ENCODE measurements at regions of chr12 and their contacts with region 1.

Region 1: DNA sequence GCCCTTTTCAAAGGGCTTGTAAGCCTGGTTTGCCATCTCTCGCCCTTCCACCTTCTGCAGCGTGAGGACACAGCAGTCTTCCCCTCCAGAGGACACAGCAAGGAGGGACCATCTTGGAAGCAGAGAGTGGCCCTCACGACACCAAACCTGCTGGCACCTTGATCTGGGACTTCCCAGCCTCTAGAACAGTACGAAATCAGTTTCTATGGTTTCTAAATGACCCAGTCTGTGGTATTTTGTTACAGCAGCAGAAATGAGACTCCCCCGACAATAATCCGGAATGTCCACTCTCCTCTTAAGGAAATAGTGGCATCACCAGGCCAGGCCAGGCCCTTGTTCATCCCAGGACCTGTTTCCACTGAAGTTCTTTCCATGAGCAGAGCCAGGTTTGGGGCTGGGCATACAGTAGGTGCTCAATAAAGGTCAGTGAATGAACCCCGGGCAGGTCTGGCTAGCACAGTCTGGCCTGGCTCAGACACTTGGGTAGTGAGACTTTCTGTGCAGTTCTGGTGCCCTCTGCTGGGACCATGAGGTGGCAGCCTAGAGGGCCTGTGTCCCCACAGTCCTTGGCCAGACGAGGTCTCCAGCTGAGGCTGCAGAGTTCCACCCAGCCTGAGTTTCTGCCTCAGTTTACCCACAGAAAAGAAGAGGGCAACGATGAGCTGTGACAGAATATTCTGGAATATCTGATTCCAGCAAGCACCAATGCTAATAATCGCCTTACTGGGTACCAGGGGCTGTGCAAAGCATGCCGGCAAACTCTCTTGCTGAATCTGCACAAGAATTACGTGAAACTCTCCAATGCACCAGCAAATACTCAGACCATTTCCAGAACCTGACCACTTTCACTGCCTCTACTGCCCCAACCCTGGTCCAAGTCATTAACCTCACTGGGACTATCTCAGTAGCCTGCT is 14.0 kb downstream of the ABCB9 start:
- DNase-seq: peak; percentile 67
- ATAC-seq: peak; percentile 98
- H3K4me3 ChIP-seq: no peak overlapping the region
- H3K27ac ChIP-seq: no peak overlapping the region
- H3K4me1 ChIP-seq: peaks cover 3% of the 10 kb centered on the region
- H3K27me3 ChIP-seq: no peaks in the 10 kb centered on the region
- CTCF ChIP-seq: peak; percentile 95
- POLR2A ChIP-seq: no peak
- RAD21 ChIP-seq: peak; percentile 95

Region 2: DNA sequence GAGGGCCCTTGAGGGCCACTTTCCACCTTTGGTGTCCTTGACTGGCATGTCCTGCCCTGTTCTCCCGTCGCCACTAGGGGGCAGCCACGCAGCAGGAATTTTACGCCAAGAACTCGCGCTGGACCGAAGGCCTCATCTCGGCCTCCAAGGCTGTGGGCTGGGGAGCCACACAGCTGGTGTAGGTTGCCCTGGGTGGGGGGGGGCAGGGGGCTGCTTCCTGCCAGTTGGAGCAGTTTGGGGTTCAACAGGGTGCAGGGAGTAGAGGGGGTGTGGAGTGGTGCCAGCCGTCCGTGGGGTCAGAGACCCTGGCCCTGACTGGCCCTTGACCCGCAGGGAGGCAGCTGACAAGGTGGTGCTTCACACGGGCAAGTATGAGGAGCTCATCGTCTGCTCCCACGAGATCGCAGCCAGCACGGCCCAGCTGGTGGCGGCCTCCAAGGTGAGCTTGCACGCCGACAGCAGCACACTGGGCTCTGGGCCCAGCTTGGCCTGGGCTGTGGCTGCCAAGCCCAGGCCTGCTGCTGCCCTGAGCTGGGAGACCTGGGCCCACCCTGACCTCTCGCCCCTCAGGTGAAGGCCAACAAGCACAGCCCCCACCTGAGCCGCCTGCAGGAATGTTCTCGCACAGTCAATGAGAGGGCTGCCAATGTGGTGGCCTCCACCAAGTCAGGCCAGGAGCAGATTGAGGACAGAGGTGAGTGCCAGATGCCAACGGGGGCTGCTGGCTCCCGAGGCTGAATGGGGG is 91.7 kb before region 1 on chr12:
- CTCF ChIA-PET with region 1: interaction called, 4 read pairs
- POLR2A ChIA-PET with region 1: no interaction called
- dilution Hi-C with region 1: no loop called
- in situ Hi-C with region 1: no loop called
- intact Hi-C with region 1: loop called (anchors 1 kb)
- DNase-seq: peak; percentile 75
- ATAC-seq: peak; percentile 77
- H3K4me3 ChIP-seq: no peak overlapping the region
- H3K27ac ChIP-seq: no peak overlapping the region
- H3K4me1 ChIP-seq: peaks cover 3% of the 10 kb centered on the region; the same call in 1 of the 2 replicates
- H3K27me3 ChIP-seq: no peaks in the 10 kb centered on the region
- CTCF ChIP-seq: peak; percentile 91
- POLR2A ChIP-seq: peak; percentile 65
- RAD21 ChIP-seq: peak; percentile 95

Region 3: DNA sequence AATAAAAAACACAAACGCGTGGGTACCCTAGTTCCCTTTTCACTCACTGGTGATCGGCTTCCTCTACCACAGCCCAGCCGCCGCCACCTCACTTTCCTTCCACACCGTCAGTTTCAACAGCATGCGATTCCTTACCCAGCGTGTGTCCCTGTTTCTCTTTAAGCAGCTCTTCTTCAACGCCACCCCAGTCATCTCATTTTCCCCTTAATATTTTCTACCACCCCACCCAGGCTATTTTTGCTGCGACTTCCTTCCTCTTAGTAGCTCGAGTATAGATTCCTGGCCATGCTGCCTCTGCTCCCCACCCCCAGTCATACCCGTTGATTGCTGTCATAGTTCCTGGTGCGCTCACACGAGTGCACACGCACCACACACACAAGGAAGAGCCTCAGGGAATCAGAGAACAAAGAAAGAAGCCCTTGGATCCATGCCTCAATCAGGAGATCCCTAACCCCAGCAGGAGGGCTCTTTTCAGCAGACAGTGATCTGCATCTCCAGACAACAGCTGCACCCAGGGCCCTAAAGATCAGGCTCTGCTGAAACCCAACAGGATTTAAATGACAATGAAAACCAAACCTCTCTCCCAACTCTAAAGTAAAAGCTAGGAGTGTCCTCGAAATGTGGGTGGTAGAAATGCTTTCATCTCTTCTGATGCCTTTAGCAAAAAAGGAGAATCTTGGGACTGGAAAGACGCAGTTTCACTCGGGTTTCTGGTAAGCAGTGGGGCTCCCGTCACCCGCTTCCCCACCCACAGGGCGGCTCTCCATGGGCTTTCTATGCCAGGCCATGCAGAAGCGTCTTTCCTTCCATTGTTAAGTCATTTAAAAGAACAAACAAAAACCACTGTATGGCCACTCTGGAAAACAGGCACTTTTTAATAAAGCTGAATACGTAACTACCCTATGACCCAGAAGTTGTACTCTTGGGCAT is 80.1 kb before region 1 on chr12:
- CTCF ChIA-PET with region 1: interaction called, 6 read pairs
- POLR2A ChIA-PET with region 1: no interaction called
- dilution Hi-C with region 1: no loop called
- in situ Hi-C with region 1: loop called (anchors 5 kb)
- intact Hi-C with region 1: no loop called
- DNase-seq: peak; percentile 88
- ATAC-seq: peak; percentile 87
- H3K4me3 ChIP-seq: peak overlapping the region; percentile 33
- H3K27ac ChIP-seq: peak overlapping the region; percentile 91
- H3K4me1 ChIP-seq: peaks cover 25% of the 10 kb centered on the region
- H3K27me3 ChIP-seq: no peaks in the 10 kb centered on the region
- CTCF ChIP-seq: no peak
- POLR2A ChIP-seq: no peak
- RAD21 ChIP-seq: no peak; the same call in 1 of the 2 replicates

Region 4: GRCh38 chr12:122884091-122884826 is 68.0 kb before region 1 on chr12:
- CTCF ChIA-PET with region 1: interaction called, 3 read pairs
- POLR2A ChIA-PET with region 1: interaction called, 12 read pairs
- dilution Hi-C with region 1: no loop called
- in situ Hi-C with region 1: no loop called
- intact Hi-C with region 1: no loop called
- DNase-seq: peak; percentile 17
- ATAC-seq: no peak
- H3K4me3 ChIP-seq: no peak overlapping the region
- H3K27ac ChIP-seq: no peak overlapping the region
- H3K4me1 ChIP-seq: peaks cover 34% of the 10 kb centered on the region
- H3K27me3 ChIP-seq: no peaks in the 10 kb centered on the region
- CTCF ChIP-seq: no peak
- POLR2A ChIP-seq: no peak
- RAD21 ChIP-seq: no peak

Region 5: DNA sequence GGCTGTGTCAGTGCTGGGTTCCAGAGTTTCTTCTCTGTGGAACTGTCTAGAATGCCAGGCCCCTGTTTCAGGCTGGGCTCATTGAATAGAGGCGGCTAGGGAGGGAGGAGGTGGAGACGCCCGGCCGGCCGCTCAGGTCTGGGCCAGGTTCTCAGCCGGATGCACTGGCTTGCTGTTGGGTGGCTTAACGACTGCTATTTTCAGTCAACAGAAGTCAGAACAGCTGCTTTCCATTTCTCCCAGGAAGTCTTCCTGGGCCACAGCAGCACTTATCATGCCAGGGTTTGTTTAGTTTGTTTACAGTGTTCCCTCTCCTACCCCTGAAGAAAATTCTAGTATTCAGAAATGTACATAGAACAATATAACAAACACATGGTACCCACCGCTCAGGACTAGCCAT is 30.3 kb before region 1 on chr12:
- CTCF ChIA-PET with region 1: no interaction called
- POLR2A ChIA-PET with region 1: no interaction called
- dilution Hi-C with region 1: no loop called
- in situ Hi-C with region 1: no loop called
- intact Hi-C with region 1: no loop called
- DNase-seq: no peak
- ATAC-seq: 0 out of 2 replicates have a peak, but pooled peaks have one; percentile 7
- H3K4me3 ChIP-seq: no peak overlapping the region
- H3K27ac ChIP-seq: no peak overlapping the region
- H3K4me1 ChIP-seq: peaks cover 18% of the 10 kb centered on the region; the same call in 1 of the 2 replicates
- H3K27me3 ChIP-seq: no peaks in the 10 kb centered on the region
- CTCF ChIP-seq: no peak
- POLR2A ChIP-seq: no peak
- RAD21 ChIP-seq: no peak

Region 6: DNA sequence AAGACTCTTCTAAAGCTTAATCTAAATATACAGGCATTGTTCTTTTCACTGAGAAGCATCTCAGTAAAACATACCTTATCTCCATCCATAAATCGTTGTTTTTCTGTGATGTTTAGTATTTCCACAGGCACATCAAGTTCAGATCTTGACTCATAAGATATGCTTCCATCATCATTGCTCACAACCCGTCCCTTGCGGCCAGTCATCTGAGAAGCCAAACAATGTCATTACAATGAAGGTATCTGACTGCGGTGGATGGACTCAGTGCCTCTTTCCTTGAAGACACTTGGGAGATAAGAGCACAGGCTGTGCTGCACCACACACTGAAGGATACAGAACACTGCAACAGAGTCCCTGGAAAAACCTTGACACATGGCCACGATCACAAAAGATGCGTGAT is 367.6 kb after region 1 on chr12:
- CTCF ChIA-PET with region 1: no interaction called
- POLR2A ChIA-PET with region 1: no interaction called
- dilution Hi-C with region 1: no loop called
- in situ Hi-C with region 1: no loop called
- intact Hi-C with region 1: no loop called
- DNase-seq: no peak
- ATAC-seq: no peak
- H3K4me3 ChIP-seq: no peak overlapping the region
- H3K27ac ChIP-seq: no peak overlapping the region
- H3K4me1 ChIP-seq: no peaks in the 10 kb centered on the region
- H3K27me3 ChIP-seq: no peaks in the 10 kb centered on the region
- CTCF ChIP-seq: no peak
- POLR2A ChIP-seq: no peak
- RAD21 ChIP-seq: no peak

Measured in IMR-90 (cell line).